ENCODE measurements at regions of chr2 and their contacts with region 1.

Region 1: GRCh38 chr2:71923887-71924533 is 223.7 kb downstream of the CYP26B1 start:
- DNase-seq: peak; percentile 26
- H3K4me3 Mint-ChIP-seq: no peak overlapping the region
- H3K27ac Mint-ChIP-seq: no peak overlapping the region
- H3K4me1 Mint-ChIP-seq: no peaks in the 10 kb centered on the region
- H3K27me3 Mint-ChIP-seq: no peaks in the 10 kb centered on the region

Region 2: GRCh38 chr2:72579591-72580180 is 655.7 kb after region 1 on chr2:
- intact Hi-C with region 1: loop called (anchors 1 kb)
- DNase-seq: no peak
- H3K4me3 Mint-ChIP-seq: no peak overlapping the region
- H3K27ac Mint-ChIP-seq: no peak overlapping the region
- H3K4me1 Mint-ChIP-seq: no peaks in the 10 kb centered on the region
- H3K27me3 Mint-ChIP-seq: peaks cover 5% of the 10 kb centered on the region

Measured in activated T-helper 2 cell treated with anti-CD3 and anti-CD28 coated beads, Interferon-gamma antibody, Interleukin-2, Interleukin-4, amounts not matched to agents 10 μg/mL and 5 μg/mL and 100 μg/mL, durations not matched to agents 14 hours and 24 hours and 36 hours (primary cell).